HAP-1 (cell line): ENCODE measurements at regions of chr22 and their contacts with region 1.

Region 1: DNA sequence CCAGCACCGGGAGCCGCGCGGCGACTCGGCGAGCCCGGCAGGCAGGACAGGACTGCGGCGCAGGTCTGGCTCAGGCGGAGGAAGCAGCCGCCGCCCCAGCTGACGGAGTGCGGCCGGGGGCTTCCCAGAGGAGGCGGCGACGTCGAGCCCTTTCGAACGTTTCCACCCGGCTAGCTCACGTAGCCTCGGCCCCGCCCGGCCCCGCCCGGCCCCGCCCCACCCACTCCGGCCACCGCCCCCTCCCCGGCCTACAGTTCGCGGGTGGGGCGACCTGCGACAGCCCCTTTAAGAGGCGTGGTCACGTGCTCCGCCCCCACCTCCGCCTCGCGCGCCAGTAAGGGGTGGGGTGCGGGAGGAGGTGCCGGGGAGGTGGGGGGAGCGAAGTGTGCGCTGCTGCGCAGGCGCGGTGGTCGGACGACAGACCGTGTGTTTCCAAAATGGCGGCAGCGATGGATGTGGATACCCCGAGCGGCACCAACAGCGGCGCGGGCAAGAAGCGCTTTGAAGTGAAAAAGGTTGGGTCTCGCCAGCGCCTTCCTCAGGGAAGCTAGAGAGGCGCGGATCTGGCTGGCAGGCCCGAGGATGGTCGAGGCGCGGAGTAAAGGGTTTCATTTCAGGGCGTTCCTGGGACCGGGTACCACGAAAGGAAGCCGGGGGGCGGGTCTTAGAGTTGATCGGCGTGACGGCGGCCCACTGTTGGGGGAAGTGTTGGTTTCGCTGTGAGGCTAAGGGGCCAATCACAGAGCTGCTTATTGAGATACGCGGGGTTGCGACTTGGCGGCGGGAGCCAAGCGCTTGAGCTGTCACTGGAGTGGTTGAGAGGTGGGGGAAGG is at the start of gene RBX1:
- DNase-seq: peak; percentile 97 to 99
- H3K4me3 ChIP-seq: peak within 1 kb of the TSS; percentile 92
- H3K4me1 ChIP-seq: peaks cover 3% of the 10 kb centered on the region
- H3K27me3 ChIP-seq: no peaks in the 10 kb centered on the region

Region 2: GRCh38 chr22:41085842-41086241 is 134.7 kb after region 1 on chr22:
- in situ Hi-C with region 1: loop called (anchors 5 kb)
- DNase-seq: no peak
- H3K4me3 ChIP-seq: no peak overlapping the region
- H3K4me1 ChIP-seq: peaks cover 3% of the 10 kb centered on the region; the same call in 1 of the 2 replicates
- H3K27me3 ChIP-seq: no peaks in the 10 kb centered on the region

Region 3: GRCh38 chr22:41140365-41140957 is 189.3 kb after region 1 on chr22:
- in situ Hi-C with region 1: no loop called
- DNase-seq: no peak
- H3K4me3 ChIP-seq: no peak overlapping the region
- H3K4me1 ChIP-seq: no peaks in the 10 kb centered on the region
- H3K27me3 ChIP-seq: no peaks in the 10 kb centered on the region